ENCODE measurements at regions of chr11 and their contacts with region 1.

Region 1: DNA sequence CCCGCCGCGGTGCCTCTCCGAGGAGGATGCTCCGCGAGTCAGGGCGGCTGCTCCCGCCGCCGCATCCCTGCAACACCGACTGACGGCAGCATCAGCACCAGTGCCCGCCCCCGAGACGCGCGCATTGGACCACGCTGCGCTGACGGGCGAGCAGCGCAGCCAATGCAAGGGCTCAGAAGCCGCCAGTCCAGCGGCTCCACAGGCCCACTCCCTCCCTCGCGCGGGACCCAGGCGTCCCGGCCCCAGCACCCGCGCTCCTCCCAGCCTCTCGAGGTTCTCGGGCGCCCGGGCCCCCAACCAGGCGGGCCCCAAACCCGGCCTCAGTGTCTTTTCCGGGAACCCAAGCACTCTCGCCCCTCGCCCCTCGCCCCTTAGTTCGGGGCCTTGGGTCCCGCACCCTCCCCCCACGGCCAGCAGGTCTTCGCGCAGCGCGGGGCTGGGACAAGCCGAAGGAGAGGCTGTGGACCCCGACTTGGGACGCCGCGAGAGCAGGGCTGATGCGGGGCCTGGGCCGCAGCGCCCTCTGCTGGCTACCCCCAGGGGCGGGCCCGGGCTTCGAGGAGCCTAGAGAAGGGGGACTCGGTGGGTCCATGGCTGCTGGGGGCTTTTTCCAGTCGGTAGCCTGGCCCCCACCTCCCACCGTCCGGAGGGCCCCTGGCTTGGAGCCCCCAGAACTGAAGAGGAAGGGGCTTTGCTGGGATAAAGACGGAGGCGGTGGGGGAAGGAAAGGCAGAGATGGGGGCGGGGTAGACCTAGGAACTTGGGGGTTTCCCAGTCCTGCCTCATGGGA is at the start of gene NRXN2:
- DNase-seq: peak; percentile 91
- H3K4me3 ChIP-seq: peak within 1 kb of the TSS; percentile 69 to 71
- H3K27ac ChIP-seq: peak within 1 kb of the TSS; percentile 12 to 84
- H3K4me1 ChIP-seq: peaks cover 8% of the 10 kb centered on the region
- H3K27me3 ChIP-seq: no peaks in the 10 kb centered on the region
- CTCF ChIP-seq: peak; percentile 89 to 98 (median 92)
- POLR2A ChIP-seq: no peak
- total RNA-seq, gene NRXN2: 32.6 to 40.1 TPM

Region 2: GRCh38 chr11:64372802-64373597 is 350.3 kb before region 1 on chr11:
- intact Hi-C with region 1: no loop called
- DNase-seq: peak; percentile 84
- H3K4me3 ChIP-seq: peak overlapping the region in 1 of 2 donors; percentile 52
- H3K27ac ChIP-seq: no peak overlapping the region
- H3K4me1 ChIP-seq: peaks cover 12% of the 10 kb centered on the region
- H3K27me3 ChIP-seq: no peaks in the 10 kb centered on the region
- CTCF ChIP-seq: no peak
- POLR2A ChIP-seq: no peak

Region 3: GRCh38 chr11:64545605-64546004 is 177.7 kb before region 1 on chr11:
- intact Hi-C with region 1: loop called (anchors 10 kb)
- DNase-seq: no peak
- H3K4me3 ChIP-seq: no peak overlapping the region
- H3K27ac ChIP-seq: no peak overlapping the region
- H3K4me1 ChIP-seq: no peaks in the 10 kb centered on the region
- H3K27me3 ChIP-seq: no peaks in the 10 kb centered on the region
- CTCF ChIP-seq: no peak
- POLR2A ChIP-seq: no peak

Region 4: DNA sequence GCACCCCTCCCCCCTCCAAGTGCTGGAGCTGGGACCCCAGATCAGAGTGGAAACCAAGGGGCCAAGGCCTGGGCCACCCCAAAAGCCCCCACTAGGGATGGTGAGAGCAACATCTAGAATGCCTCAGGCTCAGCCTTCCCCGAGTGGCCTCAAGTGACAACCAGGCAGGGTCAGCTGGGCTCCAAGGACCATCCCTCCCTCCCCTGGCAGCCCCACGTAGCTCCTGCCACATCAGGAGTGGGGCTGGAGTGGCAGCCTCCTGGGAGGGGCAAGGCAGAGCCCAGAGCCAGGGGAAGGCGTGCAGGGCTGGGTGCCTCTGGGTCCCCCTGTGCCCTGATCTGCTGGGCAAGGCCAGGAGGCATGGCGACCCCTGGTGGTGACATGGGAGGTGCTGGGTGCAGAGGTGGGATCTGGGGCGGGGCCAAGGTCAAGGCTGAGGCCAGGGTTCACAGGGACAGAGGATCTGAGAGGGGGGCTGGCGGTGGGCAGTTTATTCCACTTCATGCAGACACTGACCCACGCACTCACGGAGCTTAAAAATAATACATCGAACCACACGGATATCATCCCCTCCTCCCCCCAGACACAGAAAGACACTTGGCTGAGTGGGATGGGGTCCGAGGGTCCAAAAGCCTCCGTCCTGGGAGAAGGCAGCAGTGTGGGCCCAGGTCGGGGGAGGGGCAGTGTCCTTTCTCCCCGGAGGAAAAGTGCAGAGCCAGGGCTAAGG is 170.9 kb after region 1 on chr11:
- intact Hi-C with region 1: no loop called
- DNase-seq: peak; percentile 84
- H3K4me3 ChIP-seq: no peak overlapping the region
- H3K27ac ChIP-seq: no peak overlapping the region
- H3K4me1 ChIP-seq: no peaks in the 10 kb centered on the region
- H3K27me3 ChIP-seq: no peaks in the 10 kb centered on the region
- CTCF ChIP-seq: peak; percentile 75 to 88 (median 80)
- POLR2A ChIP-seq: no peak

Measured in testis (tissue), 5 donors.